ENCODE measurements at regions of chr9 and their contacts with region 1.

Region 1: GRCh38 chr9:33374634-33375213 is 27.6 kb downstream of the AQP7 start:
- DNase-seq: peak; percentile 88
- H3K4me3 ChIP-seq: peak overlapping the region in 1 of 3 experiments; percentile 16
- H3K27ac ChIP-seq: no peak overlapping the region
- H3K4me1 ChIP-seq: peaks cover 6% of the 10 kb centered on the region
- H3K27me3 ChIP-seq: no peaks in the 10 kb centered on the region
- CTCF ChIP-seq: peak; percentile 85 to 91
- POLR2A ChIP-seq: no peak

Region 2: DNA sequence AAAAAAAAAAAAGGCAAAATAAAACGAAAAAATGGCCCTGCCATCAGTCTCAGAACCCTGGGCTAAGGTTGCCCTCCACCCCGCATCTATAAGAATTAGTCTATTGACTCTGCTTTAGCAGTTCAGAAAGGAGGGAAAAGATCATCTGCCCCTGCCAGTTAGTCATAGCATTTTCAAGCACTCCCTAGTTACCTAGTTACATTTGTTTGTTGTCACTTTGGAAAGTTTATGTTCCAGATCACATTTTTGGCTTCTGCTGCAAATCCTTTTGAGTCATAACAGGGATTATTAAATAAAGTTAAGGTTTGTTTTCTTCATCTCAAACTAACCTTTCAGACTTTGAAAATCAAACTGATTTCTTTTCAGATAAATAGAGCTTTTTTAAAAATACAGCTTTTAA is 24.4 kb before region 1 on chr9:
- CTCF ChIA-PET with region 1: interaction called, 17 read pairs
- POLR2A ChIA-PET with region 1: no interaction called
- dilution Hi-C with region 1: no loop called
- intact Hi-C with region 1: no loop called
- DNase-seq: peak; percentile 43
- H3K4me3 ChIP-seq: no peak overlapping the region
- H3K27ac ChIP-seq: no peak overlapping the region
- H3K4me1 ChIP-seq: peaks cover 9% of the 10 kb centered on the region
- H3K27me3 ChIP-seq: no peaks in the 10 kb centered on the region
- CTCF ChIP-seq: no peak
- POLR2A ChIP-seq: no peak

Region 3: DNA sequence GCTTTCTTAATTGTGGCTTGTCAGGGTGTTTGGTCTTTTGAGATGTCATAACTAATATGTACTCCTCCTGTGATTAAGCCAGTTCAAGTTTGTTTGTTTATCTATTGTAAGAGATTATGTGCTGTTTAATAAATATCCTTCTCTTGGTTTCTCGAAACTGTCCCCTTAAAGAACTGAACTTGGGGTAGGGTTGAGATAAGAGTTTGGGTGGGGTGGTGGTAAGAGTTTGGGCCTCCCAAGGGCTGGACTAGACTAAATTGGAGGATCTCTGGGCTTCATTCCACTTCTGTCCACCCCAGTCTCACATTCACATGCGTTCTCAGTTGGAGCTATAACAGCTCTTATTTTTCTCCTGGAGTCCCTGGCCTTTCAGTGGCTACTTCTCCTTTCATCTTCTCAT is 10.6 kb before region 1 on chr9:
- CTCF ChIA-PET with region 1: interaction called, 13 read pairs
- POLR2A ChIA-PET with region 1: no interaction called
- dilution Hi-C with region 1: no loop called
- intact Hi-C with region 1: no loop called
- DNase-seq: no peak
- H3K4me3 ChIP-seq: no peak overlapping the region
- H3K27ac ChIP-seq: no peak overlapping the region
- H3K4me1 ChIP-seq: no peaks in the 10 kb centered on the region
- H3K27me3 ChIP-seq: no peaks in the 10 kb centered on the region
- CTCF ChIP-seq: no peak
- POLR2A ChIP-seq: no peak

Region 4: DNA sequence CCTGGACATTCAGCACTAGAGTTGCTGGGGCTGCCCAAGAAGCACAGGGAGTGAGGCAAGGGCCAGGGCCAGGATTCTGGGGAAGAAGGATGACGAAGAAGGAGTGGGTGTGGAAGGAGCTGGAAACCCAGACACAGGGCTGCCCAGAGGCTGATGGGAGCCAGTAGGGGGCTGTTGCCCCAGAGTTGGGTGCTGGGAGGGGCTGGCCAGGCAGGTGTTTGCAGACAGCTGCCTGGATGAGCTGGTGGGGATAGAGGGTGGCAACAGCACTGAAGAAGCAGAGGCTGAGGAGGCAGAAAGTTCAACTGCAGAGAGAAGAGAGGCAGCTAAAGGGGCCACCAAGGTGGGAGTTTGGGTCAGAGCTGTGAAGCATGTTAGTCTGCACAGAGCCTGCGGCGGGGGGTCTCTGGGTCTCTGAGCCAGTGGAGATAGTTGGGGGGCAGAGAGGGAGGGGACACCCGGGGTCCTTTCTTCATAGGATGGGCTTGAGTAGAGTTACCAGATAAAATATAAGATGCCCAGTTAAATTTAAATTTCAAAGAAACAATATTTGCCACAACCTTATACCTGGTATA is 30.2 kb after region 1 on chr9:
- CTCF ChIA-PET with region 1: interaction called, 164 read pairs
- POLR2A ChIA-PET with region 1: no interaction called
- dilution Hi-C with region 1: no loop called
- intact Hi-C with region 1: loop called (anchors 1 kb)
- DNase-seq: no peak
- H3K4me3 ChIP-seq: no peak overlapping the region
- H3K27ac ChIP-seq: no peak overlapping the region
- H3K4me1 ChIP-seq: no peaks in the 10 kb centered on the region
- H3K27me3 ChIP-seq: no peaks in the 10 kb centered on the region
- CTCF ChIP-seq: no peak
- POLR2A ChIP-seq: no peak

Region 5: DNA sequence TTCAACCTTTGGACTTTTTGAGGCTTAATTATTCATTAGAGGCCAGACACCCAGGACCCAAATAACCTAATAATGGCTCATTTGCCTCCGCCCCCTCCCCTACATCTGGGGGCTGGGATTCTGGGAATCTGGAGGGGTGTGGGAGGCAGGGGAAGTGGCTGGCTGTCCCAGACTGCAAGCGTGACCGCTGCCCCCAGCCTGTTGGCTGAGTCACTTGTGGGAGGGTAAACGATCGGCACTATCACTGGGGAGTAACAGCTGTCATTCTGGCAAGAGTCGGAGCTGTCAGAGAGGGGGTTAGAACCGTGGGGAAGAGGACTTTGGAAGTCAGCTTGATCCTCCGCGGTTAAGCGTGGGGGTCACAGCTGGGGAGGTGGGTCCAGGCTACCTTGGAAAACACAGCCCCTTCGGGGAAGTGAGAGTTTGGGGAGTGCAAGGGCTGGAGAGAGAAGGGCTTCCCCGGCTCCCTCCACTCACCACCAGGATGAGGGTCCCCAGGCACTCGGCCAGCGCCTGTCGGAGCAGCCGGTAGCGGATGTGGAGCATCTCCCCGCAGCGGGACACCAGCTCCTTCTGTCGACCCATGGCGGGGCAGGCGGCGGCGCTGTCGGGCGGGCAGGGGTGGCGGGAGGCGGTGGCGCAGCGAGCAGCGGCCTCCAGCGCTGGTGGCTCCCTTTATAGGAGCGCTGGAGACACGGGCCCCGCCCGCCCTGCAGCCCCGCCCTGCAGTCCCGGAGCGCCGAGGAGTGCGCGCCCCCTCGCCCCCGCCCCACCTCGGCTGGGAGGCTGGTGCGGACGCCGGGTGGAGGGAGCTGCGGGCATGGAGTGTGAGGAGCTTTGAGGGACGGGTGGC is 72.4 kb after region 1 on chr9 and contains the start of gene AQP3:
- CTCF ChIA-PET with region 1: interaction called, 121 read pairs
- POLR2A ChIA-PET with region 1: no interaction called
- dilution Hi-C with region 1: no loop called
- intact Hi-C with region 1: loop called (anchors 1 kb)
- DNase-seq: peak; percentile 51
- H3K4me3 ChIP-seq: peak within 1 kb of the TSS; percentile 19 to 36 (median 20)
- H3K27ac ChIP-seq: no peak within 1 kb of the TSS
- H3K4me1 ChIP-seq: peaks cover 3% of the 10 kb centered on the region
- H3K27me3 ChIP-seq: peaks cover 0 to 2% of the 10 kb centered on the region in 2 experiments
- CTCF ChIP-seq: peak in 1 of 2 donors; percentile 46
- POLR2A ChIP-seq: no peak
- total RNA-seq, gene AQP3: 0.39 and 0.93 TPM in 2 replicates

Region 6: DNA sequence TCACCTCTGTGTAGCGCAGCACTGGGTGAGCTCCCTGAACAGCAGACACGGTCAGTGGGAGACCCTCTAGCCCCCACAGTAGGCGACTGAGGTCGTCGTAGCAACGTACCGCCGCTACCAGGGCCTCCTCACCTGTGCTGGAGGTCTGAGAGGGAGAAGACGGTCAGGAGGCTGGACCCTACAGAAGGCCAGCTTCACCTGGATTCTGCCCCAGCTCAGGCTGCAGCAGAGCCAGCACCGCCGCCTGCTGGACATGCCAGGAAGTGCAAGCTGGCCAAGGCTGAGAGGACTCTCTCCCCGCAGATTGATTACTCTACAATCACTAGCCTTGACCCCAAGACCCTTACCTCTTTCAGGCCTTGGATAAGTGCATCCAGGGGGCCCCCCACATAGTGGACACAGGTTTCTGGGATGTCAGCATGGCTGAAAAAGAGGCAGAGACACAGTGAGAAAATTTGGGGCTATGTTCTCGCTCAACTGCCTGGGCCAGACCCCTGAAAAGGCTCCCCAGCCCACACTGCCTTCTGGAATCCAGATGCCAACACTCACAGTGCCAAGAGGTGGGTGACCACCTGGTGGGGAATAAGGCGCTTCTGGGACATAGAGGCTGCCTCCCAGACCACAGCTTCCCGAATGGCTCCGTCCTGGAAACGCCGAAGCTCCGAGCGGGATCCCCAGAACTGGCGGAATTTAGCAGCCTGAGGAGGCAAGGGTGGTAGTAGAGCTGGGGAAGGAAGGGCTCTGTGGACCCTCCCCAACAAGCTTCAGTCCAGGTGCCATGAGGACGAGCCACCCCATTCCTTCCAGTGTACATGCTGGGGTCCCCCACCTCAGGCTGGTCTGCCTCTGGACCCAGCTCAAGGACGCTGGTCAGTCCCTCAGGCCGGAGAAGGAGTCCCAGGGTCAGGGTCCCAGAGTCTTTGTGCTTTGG is 92.1 kb after region 1 on chr9:
- CTCF ChIA-PET with region 1: interaction called, 146 read pairs
- POLR2A ChIA-PET with region 1: interaction called, 3 read pairs
- dilution Hi-C with region 1: no loop called
- intact Hi-C with region 1: loop called (anchors 1 kb)
- DNase-seq: peak; percentile 38
- H3K4me3 ChIP-seq: no peak overlapping the region
- H3K27ac ChIP-seq: no peak overlapping the region
- H3K4me1 ChIP-seq: no peaks in the 10 kb centered on the region
- H3K27me3 ChIP-seq: no peaks in the 10 kb centered on the region
- CTCF ChIP-seq: peak; percentile 93 to 98
- POLR2A ChIP-seq: no peak